ENCODE measurements at regions of chr4 and their contacts with region 1.

Region 1: DNA sequence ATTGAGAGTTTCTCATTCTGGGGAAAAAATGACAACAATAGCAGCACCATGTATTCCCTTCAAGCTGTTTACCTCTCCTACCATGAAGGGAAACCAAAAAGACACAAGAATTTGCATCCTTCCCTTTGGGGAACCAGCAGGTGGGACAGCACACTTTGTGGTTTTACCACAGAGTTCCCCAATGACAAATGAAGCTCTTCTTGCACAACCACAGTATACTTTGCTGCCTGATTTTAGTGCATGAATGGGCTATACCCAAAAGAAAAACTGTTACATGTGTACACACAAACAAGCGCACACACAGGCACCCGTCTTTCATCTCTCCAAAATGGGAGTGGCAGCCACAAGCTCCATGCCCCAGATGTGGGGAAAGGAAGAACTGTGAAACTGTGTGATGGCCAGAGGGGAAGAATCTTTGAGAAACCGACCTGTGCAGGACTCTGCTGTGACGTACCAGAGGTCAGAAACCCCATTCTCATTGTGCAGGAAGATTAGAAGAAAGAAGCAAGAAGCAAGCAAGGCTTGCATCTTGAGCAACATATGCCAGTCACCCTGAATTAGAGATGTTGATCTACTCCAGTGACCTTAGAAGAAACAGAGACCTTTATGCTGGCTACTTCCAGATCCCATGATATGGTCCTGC is 2.7 kb upstream of the MAML3 start:
- DNase-seq: no peak
- ATAC-seq: no peak
- H3K4me3 ChIP-seq: no peak overlapping the region
- H3K27ac ChIP-seq: no peak overlapping the region
- H3K4me1 ChIP-seq: peaks cover 2 to 16% (median 7%) of the 10 kb centered on the region in 4 donors
- H3K27me3 ChIP-seq: no peaks in the 10 kb centered on the region
- CTCF ChIP-seq: no peak
- POLR2A ChIP-seq: no peak

Region 2: DNA sequence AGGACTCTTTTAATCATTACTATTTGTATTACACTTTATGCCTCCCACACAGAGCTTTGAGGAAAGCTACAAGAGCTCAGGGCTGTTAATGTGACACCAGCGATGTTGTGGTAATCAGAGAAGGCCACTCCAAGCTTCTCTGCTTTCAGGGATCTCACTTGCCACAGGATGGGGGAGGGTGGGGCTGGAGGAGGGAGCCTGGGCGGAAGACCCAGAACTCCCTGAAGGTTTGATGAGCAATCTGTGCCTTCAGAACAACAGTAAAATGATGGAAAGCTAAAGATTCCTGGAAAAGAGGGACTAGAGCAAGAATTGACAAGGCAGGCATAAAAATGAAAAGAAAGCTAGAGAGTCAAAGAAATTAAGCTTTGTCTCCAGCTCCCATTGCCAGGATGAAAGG is 78.3 kb before region 1 on chr4:
- intact Hi-C with region 1: no loop called
- DNase-seq: no peak
- ATAC-seq: no peak
- H3K4me3 ChIP-seq: no peak overlapping the region
- H3K27ac ChIP-seq: no peak overlapping the region
- H3K4me1 ChIP-seq: no peaks in the 10 kb centered on the region
- H3K27me3 ChIP-seq: no peaks in the 10 kb centered on the region
- CTCF ChIP-seq: no peak
- POLR2A ChIP-seq: no peak

Region 3: DNA sequence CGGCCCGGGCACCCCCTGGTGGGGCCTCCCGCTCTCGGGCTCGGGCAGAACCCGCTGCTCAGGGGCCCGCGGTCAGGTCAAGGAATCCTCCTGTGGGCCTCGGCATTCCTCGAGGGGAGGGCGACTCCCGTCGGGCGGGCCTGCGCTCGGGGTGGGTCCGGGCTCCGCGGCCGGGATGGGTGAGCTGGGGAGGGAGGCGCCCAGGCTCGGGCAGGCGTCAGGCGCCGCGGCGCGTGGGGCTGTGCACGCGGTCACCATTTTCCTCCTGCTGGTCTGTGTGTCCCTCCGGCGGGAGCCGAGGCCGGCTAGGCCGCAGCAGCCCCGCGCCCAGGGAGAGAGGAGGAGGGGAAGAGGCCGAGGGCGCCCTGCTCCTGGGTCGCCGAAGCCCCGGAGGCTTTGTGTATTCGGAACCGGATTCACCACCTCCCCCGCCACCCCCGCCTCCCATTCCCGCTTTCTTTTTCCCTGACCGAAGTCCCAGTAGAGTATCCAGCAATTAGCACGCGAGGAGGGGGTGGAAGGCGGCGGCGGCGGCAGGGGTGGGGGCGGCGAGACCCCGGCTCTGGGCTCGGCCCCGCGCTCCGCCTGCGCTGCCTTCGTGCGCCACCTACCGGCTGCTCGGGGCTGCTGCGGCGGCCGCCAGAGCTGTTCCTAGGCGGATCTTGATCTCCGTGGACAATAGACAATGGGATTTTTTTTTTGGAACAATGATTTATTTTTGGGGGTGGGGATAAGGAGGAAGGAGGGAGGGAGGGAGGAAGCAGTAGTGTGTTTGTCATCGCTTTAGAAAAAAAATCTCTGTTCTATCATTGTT is 96.3 kb after region 1 on chr4:
- intact Hi-C with region 1: loop called in 1 of 2 experiments (anchors 5 kb)
- DNase-seq: peak; percentile 78 to 83 (median 79)
- ATAC-seq: peak; percentile 86 to 94 (median 90)
- H3K4me3 ChIP-seq: peak overlapping the region; percentile 53 to 72 (median 70)
- H3K27ac ChIP-seq: peak overlapping the region; percentile 88 to 91 (median 91)
- H3K4me1 ChIP-seq: peaks cover 0 to 9% (median 0%) of the 10 kb centered on the region in 4 donors
- H3K27me3 ChIP-seq: no peaks in the 10 kb centered on the region
- CTCF ChIP-seq: peak; percentile 83 to 96 (median 93)
- POLR2A ChIP-seq: no peak

Measured in right lobe of liver (tissue), 6 donors.